ENCODE measurements at regions of chr7 and their contacts with region 1.

Region 1: DNA sequence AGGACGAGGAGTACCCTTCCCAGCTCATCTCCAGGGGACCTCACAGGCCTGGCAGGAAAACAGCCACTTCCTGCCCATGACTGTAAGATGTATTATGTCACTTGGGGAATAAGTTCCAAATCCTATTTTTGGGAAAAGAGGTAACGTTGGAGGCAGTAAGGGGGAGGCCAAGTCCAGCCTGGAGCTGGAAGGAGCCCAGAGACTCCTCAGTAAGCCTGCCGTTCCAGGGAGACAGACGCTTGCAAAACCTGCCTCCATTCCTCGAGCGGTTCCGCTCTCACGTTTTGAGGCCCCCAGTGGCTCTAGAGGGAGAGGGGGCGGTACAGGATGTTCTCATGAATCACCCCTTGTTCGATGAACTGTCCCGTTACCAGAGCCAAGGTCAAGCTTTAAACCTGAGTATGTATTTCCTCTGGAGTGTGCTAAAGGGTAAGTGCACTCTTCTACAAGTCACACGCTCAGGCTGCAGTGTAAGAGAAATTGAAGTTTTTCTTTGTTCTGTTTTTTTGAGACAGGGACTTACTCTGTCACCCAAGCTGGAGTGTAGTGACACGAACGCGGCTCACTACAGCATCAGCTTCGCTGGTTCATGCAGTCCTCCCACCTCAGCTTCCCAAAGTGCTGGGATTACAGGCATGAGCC is 45.5 kb upstream of the CYTH3 start:
- DNase-seq: no peak
- H3K4me3 ChIP-seq: no peak overlapping the region
- H3K27ac ChIP-seq: peak overlapping the region in 1 of 2 experiments; percentile 54; a peak in 2 of 4 replicates
- H3K4me1 ChIP-seq: peaks cover 0 to 13% of the 10 kb centered on the region in 2 experiments; a peak in 2 of 4 replicates
- H3K27me3 ChIP-seq: no peaks in the 10 kb centered on the region
- CTCF ChIP-seq: no peak
- EP300 ChIP-seq: no peak
- RAD21 ChIP-seq: no peak

Region 2: DNA sequence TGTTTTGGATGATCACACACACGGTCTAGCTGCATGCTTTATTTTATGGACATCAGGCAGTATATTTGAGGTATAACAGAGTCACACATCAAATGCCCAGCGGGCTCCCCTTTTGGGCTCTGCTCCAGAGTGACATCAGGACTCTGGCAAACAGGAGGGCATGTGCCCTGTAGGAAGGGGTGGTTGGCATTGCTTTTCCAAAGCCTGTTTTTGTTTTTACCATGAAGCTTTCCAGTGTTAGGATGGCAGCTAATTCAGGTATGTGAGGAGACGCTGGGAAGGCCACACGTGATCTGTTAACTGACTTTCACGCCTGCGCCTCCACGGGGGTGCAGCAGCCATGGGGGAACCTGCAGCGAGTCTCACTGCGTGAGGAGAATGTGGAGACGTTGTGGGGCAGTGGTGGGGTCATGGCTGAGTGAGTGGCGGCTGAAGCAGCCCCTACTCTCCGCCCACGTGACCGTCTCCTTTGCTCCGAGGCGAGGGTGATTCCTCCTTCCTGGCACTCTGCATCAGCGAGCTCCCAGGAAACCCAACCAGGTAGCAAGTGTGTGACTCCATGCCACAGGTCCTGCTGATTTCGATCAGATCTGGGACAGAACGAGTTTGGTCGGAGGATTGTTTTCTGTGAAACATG is 169.1 kb before region 1 on chr7:
- CTCF ChIA-PET with region 1: interaction called, 10 read pairs
- POLR2A ChIA-PET with region 1: no interaction called
- DNase-seq: no peak
- H3K4me3 ChIP-seq: no peak overlapping the region
- H3K27ac ChIP-seq: no peak overlapping the region
- H3K4me1 ChIP-seq: no peaks in the 10 kb centered on the region
- H3K27me3 ChIP-seq: no peaks in the 10 kb centered on the region
- CTCF ChIP-seq: no peak
- EP300 ChIP-seq: no peak
- RAD21 ChIP-seq: no peak